Activated naive CD4-positive, alpha-beta T cell treated with anti-CD3 and anti-CD28 coated beads, Interleukin-2, amount 10 ng/mL, durations not matched to agents 7 days and 5 days (primary cell): ENCODE measurements at regions of chr9 and their contacts with region 1.

Region 1: DNA sequence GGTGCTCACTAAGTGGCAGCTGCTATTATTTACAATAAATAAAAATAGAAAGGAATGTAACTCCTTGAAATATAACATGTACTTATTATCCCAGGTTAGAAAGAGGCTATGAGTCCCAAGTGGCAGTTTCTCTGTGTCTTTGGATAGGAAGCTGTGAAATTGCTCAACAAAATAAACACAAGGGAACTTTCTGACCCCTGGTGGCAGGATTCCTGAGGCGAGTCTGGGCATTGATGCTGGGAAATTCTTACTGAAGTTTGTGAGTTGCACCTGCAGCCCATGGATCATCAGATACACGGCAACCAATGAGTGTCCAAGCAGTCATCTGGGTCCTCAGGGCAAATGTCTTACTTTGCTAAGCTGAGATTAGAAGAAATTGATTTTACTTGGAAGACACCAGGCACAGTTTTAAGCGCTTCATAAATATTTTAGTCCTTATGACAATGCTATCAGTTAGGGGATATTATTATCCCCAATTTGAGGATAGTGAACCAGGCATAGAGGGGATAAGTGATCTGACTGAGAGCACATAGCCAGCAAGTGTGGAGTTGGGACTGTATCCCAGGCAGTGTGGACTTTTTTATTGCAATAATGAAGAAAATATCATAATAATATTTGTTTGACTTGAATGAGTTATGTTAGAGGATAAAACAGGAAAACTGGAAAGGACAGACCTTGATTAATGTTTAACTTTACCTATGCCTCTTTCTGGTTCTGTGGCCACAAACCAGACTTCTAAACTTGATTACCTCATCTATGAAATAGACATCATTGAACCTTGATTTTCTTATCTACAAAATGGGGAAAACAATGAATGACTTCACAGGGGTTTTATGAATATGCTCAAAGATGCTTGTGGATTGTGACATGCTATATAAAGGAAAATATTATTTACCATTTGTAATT is 265.5 kb upstream of the ADAMTSL1 start:
- DNase-seq: no peak
- H3K4me3 Mint-ChIP-seq: no peak overlapping the region
- H3K27ac Mint-ChIP-seq: no peak overlapping the region
- H3K4me1 Mint-ChIP-seq: no peaks in the 10 kb centered on the region
- H3K27me3 Mint-ChIP-seq: no peaks in the 10 kb centered on the region

Region 2: DNA sequence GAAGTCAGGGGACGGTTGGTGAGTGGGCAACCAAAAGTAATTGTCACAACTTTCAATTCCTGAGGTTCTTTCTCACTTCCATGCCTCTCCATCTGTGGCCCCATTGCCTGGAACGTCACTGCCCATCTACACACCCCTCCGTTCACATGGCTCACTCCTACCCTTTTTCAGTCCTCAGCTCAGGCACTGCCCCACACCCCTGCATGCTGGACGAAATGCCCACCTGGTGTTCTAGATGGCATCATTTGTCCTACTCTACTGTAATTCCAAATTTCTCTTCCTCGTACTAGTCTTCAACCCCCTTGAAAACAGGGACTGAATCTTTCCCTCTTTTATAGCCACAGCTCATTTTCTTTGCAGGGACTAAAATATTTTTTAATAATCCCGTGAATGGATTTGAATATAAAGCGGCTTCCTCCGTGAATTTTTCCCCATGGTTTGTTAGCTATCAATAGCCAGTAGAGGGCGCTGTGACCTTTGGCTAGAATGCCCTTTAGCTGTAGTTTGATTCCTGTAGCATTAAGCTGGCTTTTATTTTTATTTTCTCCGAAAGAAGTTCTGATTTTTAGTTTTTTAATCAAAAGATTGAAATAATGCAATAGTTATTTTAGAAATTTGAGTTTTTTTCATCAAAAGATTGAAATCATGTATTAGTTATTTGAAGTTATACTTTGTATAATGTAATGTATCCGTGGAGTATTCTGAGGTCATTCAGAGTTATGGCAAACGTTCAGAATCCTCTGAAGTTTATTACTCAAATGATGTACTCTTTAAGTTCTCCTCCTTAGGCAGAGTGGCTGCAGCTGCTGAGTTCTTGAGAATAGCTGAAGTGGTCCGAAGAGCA is 397.5 kb before region 1 on chr9:
- CTCF ChIA-PET with region 1: interaction called, 18 read pairs
- DNase-seq: peak; percentile 44
- H3K4me3 Mint-ChIP-seq: no peak overlapping the region
- H3K27ac Mint-ChIP-seq: no peak overlapping the region
- H3K4me1 Mint-ChIP-seq: no peaks in the 10 kb centered on the region
- H3K27me3 Mint-ChIP-seq: no peaks in the 10 kb centered on the region

Region 3: GRCh38 chr9:18184401-18184800 is 24.0 kb before region 1 on chr9:
- CTCF ChIA-PET with region 1: no interaction called
- DNase-seq: no peak
- H3K4me3 Mint-ChIP-seq: no peak overlapping the region
- H3K27ac Mint-ChIP-seq: no peak overlapping the region
- H3K4me1 Mint-ChIP-seq: no peaks in the 10 kb centered on the region
- H3K27me3 Mint-ChIP-seq: no peaks in the 10 kb centered on the region